Posterior vena cava (tissue), 2 donors: ENCODE measurements at regions of chr11 and their contacts with region 1.

Region 1: DNA sequence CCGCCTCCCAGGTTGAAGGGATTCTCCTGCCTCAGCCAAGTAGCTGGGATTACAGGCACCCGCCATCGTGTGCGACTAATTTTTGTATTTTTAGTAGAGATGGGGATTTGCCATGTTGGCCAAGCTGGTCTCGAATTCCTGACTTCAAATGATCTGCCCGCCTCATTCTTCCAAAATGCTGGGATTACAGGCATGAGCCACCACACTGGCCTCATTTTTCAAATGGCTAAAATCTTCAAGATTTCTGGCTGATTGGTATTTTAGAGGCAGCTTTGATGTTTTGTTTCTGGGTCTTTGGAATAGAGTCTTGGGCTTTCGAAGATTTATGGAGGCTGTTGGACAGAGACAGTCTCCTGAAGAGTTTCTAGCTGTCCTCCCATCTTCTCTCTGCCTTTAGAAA is 5.8 kb upstream of the SLC3A2 start:
- DNase-seq: no peak

Region 2: GRCh38 chr11:62632492-62632891 is 242.4 kb before region 1 on chr11:
- intact Hi-C with region 1: no loop called
- DNase-seq: no peak

Region 3: GRCh38 chr11:62777389-62777788 is 97.5 kb before region 1 on chr11:
- intact Hi-C with region 1: no loop called
- DNase-seq: no peak

Region 4: GRCh38 chr11:62805076-62805892 is 69.6 kb before region 1 on chr11 and contains the start of gene NXF1:
- intact Hi-C with region 1: no loop called
- DNase-seq: peak; percentile 99
- total RNA-seq, gene NXF1: 53.0 to 58.1 TPM

Region 5: DNA sequence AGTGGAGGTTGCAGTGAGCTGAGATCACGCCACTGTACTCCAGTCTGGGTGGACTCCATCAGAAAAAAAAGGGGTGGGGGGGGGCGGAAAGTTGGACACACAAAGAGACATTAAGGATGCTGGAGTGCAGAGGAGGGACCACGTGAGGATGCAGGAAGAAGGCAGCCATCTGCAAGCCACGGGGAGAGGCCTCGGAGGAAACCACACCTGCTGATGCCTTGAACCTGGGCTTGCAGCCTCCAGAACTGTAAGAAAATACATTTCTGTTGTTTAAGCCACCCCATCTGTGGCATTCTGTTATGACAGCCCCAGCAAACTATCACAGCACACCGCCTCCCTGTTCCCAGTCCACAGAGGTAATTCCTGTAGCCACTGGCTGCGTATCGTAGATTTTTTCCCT is 1301.9 kb after region 1 on chr11:
- intact Hi-C with region 1: loop called in 1 of 2 experiments (anchors 5 kb)
- DNase-seq: no peak